ENCODE measurements at regions of chr13 and their contacts with region 1.

Region 1: GRCh38 chr13:27362064-27362883 is 62.1 kb upstream of the GTF3A start:
- DNase-seq: peak; percentile 89
- ATAC-seq: peak; percentile 97
- H3K4me3 Mint-ChIP-seq: peak overlapping the region; percentile 26
- H3K27ac Mint-ChIP-seq: no peak overlapping the region
- H3K4me1 Mint-ChIP-seq: peaks cover 2% of the 10 kb centered on the region
- H3K27me3 Mint-ChIP-seq: peaks cover 8% of the 10 kb centered on the region

Region 2: DNA sequence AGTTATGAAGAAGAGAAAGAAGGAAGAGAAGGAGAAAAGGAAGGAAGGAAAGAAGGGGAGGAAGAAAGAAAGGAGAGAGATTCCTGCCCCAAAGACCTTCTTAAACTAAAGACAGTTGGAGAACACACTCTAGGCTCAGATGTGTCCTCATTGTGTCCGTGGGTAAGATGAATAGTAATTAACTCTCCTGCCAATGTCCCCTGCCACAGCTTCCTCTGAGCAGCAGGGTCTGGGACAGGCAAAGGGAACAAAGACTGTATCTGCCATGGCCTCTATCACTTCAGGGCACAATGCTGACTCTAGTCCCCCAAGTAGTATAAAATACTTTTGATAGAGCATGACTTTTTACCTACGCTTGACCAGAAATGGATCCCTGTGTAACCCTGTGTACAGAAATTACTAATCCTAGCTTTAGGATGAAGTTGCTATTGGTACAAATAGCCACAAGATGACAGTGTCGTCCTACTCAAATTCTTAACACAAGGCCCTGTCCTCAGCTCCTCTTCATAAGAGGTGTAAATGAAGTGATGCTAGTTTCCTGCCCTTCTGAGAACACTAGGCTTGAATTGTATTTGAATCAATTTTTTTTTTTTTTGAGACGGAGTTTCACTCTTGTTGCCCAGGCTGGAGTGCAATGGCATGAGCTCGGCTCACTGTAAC is 415.5 kb before region 1 on chr13:
- CTCF ChIA-PET with region 1: interaction called, 15 read pairs
- POLR2A ChIA-PET with region 1: no interaction called
- intact Hi-C with region 1: loop called in 1 of 2 experiments (anchors 1 kb)
- DNase-seq: no peak
- ATAC-seq: peak; percentile 69
- H3K4me3 Mint-ChIP-seq: no peak overlapping the region
- H3K27ac Mint-ChIP-seq: no peak overlapping the region
- H3K4me1 Mint-ChIP-seq: no peaks in the 10 kb centered on the region
- H3K27me3 Mint-ChIP-seq: peaks cover 4% of the 10 kb centered on the region

Region 3: DNA sequence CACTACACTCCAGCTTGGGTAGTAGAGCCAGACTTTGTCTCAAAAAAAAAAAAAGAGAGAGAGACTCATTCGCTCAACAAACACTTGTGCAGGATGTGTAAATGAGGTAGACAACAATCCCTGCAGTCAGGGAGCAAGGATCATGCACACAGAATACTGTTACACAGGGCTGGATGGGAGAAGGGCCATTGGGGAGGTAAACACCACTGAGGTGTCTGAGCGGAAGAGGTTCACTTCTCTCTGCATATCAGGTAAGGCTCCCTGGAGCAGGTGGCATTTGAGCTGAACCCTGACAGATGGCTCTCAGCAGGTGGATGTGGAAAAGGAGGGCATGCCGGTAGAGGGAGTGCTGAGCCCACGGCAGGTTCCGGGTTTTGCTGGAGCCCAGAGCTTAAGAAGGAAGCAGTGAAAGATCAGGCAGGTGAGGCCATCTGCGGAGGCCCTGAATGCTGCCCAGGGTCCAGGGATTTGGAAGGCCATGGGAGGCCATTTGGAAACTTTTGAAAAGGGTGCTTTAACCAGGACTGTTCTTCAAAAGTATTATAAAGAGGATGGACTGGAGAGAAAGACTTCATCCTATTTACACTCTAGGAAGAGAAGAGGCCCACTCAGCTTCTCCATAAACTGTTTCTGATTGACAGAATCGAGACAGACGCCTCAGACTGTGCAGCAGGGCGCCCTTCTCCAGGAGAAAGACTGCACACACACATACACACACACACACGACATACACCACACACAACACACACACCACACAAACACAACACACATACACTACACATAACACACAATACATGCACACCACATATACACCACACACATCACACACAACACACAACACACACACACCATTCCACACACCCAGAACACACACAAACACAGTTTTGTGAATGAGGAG is 390.0 kb before region 1 on chr13:
- CTCF ChIA-PET with region 1: interaction called, 12 read pairs
- POLR2A ChIA-PET with region 1: no interaction called
- intact Hi-C with region 1: no loop called
- DNase-seq: peak; percentile 66
- ATAC-seq: peak; percentile 85
- H3K4me3 Mint-ChIP-seq: no peak overlapping the region
- H3K27ac Mint-ChIP-seq: no peak overlapping the region
- H3K4me1 Mint-ChIP-seq: peaks cover 5% of the 10 kb centered on the region
- H3K27me3 Mint-ChIP-seq: no peaks in the 10 kb centered on the region

Region 4: GRCh38 chr13:27339299-27339698 is 23.0 kb before region 1 on chr13:
- CTCF ChIA-PET with region 1: interaction called, 5 read pairs
- POLR2A ChIA-PET with region 1: no interaction called
- intact Hi-C with region 1: loop called in 1 of 2 experiments (anchors 1 kb)
- DNase-seq: peak; percentile 71
- ATAC-seq: peak; percentile 90
- H3K4me3 Mint-ChIP-seq: no peak overlapping the region
- H3K27ac Mint-ChIP-seq: no peak overlapping the region
- H3K4me1 Mint-ChIP-seq: no peaks in the 10 kb centered on the region
- H3K27me3 Mint-ChIP-seq: peaks cover 7% of the 10 kb centered on the region

Region 5: GRCh38 chr13:27374650-27375049 is 12.4 kb after region 1 on chr13:
- CTCF ChIA-PET with region 1: interaction called, 35 read pairs
- POLR2A ChIA-PET with region 1: no interaction called
- intact Hi-C with region 1: no loop called
- DNase-seq: peak; percentile 72
- ATAC-seq: peak; percentile 95
- H3K4me3 Mint-ChIP-seq: no peak overlapping the region
- H3K27ac Mint-ChIP-seq: no peak overlapping the region
- H3K4me1 Mint-ChIP-seq: peaks cover 3% of the 10 kb centered on the region
- H3K27me3 Mint-ChIP-seq: peaks cover 15% of the 10 kb centered on the region

Region 6: DNA sequence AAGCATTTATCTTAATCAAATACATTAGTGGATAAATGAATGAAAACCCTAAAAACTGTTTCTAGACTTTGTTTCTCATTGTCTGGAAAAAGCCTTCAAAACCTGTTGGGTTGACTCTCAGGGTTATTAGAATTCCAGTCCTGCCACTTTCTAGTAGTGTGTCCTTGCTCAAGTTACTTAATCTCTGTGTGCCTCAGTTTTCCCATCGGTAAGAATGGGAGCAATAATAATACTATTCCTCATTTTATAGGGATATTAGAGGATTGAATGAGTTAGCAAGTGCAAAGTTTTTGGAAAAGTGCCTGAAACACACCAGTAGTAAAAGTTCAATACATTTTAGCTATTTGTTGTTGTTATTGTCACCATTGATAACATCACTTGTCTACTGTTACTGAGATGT is 623.3 kb after region 1 on chr13:
- CTCF ChIA-PET with region 1: interaction called, 12 read pairs
- POLR2A ChIA-PET with region 1: no interaction called
- intact Hi-C with region 1: loop called (anchors 1 to 2 kb)
- DNase-seq: no peak
- ATAC-seq: no peak
- H3K4me3 Mint-ChIP-seq: no peak overlapping the region
- H3K27ac Mint-ChIP-seq: no peak overlapping the region
- H3K4me1 Mint-ChIP-seq: no peaks in the 10 kb centered on the region
- H3K27me3 Mint-ChIP-seq: peaks cover 39% of the 10 kb centered on the region

Region 7: DNA sequence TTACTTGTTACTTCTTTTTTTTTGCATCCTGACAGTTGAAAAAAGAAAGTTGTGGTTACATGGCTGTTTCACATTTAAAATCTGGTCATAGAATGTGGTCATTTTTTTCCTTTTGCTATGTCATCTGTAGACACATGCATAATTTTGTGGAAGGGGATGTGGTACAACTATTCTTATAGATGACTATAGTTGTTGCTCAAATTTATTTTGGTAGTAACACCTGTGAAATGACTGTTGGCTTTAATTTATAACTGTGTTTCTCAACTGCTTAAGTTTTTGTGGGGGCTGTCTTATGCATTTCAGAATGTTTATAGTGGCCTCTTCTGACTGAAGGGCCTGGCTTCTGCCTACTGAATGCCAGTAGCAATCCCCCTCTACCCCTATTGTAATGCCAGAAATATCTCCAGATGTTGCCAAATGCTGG is 906.5 kb after region 1 on chr13:
- CTCF ChIA-PET with region 1: no interaction called
- POLR2A ChIA-PET with region 1: no interaction called
- intact Hi-C with region 1: no loop called
- DNase-seq: no peak
- ATAC-seq: peak; percentile 90
- H3K4me3 Mint-ChIP-seq: no peak overlapping the region
- H3K27ac Mint-ChIP-seq: no peak overlapping the region
- H3K4me1 Mint-ChIP-seq: peaks cover 15% of the 10 kb centered on the region
- H3K27me3 Mint-ChIP-seq: no peaks in the 10 kb centered on the region

Measured in activated CD4-positive, alpha-beta T cell treated with anti-CD3 and anti-CD28 coated beads for 36 hours (primary cell).